HEK293T (cell line): ENCODE measurements at regions of chr19 and their contacts with region 1.

Region 1: DNA sequence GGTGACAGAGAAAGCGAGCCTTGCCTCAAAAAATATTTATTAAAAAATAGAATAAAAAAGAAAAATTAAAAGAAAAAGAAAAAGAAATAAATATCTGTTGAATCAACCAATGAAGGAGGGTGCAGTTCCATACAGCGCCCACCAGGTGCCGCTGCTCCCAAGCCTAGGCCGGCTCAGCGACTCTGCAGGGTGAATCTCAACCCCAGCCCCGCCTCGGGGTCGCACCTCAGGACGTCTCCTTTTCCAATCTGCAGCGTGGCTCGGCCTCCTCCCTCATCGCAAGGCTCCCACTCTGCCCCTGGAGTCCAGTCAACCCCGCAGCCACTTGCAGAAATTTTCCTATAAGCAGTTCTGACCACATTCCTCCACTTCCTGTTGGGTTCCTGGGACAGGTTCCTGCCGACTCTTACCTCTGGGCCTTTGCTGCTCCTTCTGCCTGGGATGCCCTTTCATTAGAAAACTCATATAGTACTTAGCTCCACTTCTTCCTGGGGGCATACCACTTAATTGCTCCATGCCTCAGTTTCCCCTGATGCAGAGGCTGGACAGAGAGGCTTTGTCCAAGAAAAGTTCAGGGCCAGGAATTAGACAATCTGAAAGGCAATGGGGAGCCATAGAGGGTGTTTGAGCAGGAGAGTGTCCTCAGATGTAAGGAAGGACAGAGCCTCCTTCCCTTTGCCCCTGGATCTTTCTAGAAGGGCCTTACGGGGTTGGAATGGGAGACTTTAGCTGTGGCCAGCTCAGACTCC is 24.3 kb downstream of the NFILZ start:
- DNase-seq: peak; percentile 83

Region 2: GRCh38 chr19:8618751-8619150 is 36.0 kb before region 1 on chr19:
- CTCF ChIA-PET with region 1: no interaction called
- POLR2A ChIA-PET with region 1: no interaction called
- DNase-seq: no peak

Region 3: GRCh38 chr19:8638078-8638619 is 16.6 kb before region 1 on chr19:
- CTCF ChIA-PET with region 1: no interaction called
- POLR2A ChIA-PET with region 1: no interaction called
- DNase-seq: no peak

Region 4: GRCh38 chr19:8697671-8698432 is 43.1 kb after region 1 on chr19:
- CTCF ChIA-PET with region 1: interaction called, 19 read pairs
- POLR2A ChIA-PET with region 1: no interaction called
- DNase-seq: peak; percentile 49